CD4-positive, alpha-beta T cell (primary cell): ENCODE measurements at regions of chr12 and their contacts with region 1.

Region 1: DNA sequence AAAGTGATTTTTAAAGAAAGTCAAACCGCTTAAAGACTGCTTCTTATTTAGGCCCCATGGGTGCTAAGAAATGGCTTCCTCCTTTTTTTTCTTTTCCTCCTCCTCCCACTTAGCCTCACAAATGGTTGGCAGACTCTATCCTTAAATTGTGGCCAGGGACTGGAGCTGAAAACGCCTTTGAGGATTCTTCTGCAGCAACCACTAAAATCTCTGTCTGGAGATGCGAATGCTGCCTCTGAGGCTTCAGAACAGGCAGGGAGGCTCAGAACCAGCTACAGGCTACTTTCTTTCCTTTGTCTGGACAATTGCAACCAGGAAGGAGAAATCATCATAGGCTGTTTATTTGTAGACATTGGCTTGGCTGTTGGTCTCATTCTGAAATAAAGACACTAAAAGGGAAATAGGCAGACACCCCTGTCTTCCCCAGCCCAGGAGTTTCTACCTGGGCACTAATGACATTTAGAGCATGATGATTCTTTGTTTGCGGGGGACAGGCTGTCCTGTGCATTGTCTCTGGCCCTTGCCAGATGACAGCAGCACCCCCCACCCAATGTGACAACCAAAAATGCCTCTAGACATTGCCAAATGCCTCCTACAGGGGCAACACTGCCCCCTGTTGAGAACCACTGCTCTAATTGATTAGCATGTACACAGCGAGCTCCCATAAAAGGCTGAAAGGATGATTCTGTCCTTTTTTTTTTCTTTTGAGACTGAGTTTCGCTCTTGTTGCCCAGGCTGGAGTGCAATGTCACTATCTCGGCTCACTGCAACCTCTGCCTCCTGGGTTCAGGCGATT is 50.3 kb downstream of the MAP1LC3B2 start:
- DNase-seq: peak in 10 of 14 experiments; percentile 4 to 60 (median 22)
- ATAC-seq: peak; percentile 39
- H3K4me3 ChIP-seq: no peak overlapping the region
- H3K4me3 Mint-ChIP-seq: no peak overlapping the region
- H3K27ac ChIP-seq: no peak overlapping the region
- H3K27ac Mint-ChIP-seq: no peak overlapping the region
- H3K4me1 ChIP-seq: peaks cover 5% of the 10 kb centered on the region
- H3K4me1 Mint-ChIP-seq: peaks cover 3% of the 10 kb centered on the region
- H3K27me3 ChIP-seq: peaks cover 0 to 2% of the 10 kb centered on the region in 2 experiments
- H3K27me3 Mint-ChIP-seq: peaks cover 4% of the 10 kb centered on the region
- CTCF ChIP-seq: peak; percentile 48

Region 2: GRCh38 chr12:115998119-115998633 is 611.3 kb before region 1 on chr12:
- CTCF ChIA-PET with region 1: no interaction called
- POLR2A ChIA-PET with region 1: no interaction called
- intact Hi-C with region 1: loop called in 1 of 2 experiments (anchors 5 kb)
- DNase-seq: peak in 4 of 14 experiments; percentile 35 to 69 (median 56)
- ATAC-seq: peak; percentile 46
- H3K4me3 ChIP-seq: no peak overlapping the region
- H3K4me3 Mint-ChIP-seq: no peak overlapping the region
- H3K27ac ChIP-seq: no peak overlapping the region
- H3K27ac Mint-ChIP-seq: peak overlapping the region; percentile 54
- H3K4me1 ChIP-seq: peaks cover 3% of the 10 kb centered on the region
- H3K4me1 Mint-ChIP-seq: peaks cover 26% of the 10 kb centered on the region
- H3K27me3 ChIP-seq: no peaks in the 10 kb centered on the region
- H3K27me3 Mint-ChIP-seq: no peaks in the 10 kb centered on the region
- CTCF ChIP-seq: peak; percentile 94

Region 3: GRCh38 chr12:116222358-116222757 is 387.2 kb before region 1 on chr12:
- CTCF ChIA-PET with region 1: no interaction called
- POLR2A ChIA-PET with region 1: no interaction called
- intact Hi-C with region 1: no loop called
- DNase-seq: peak in 1 of 14 experiments; percentile 50
- ATAC-seq: no peak
- H3K4me3 ChIP-seq: no peak overlapping the region
- H3K4me3 Mint-ChIP-seq: no peak overlapping the region
- H3K27ac ChIP-seq: no peak overlapping the region
- H3K27ac Mint-ChIP-seq: no peak overlapping the region
- H3K4me1 ChIP-seq: no peaks in the 10 kb centered on the region
- H3K4me1 Mint-ChIP-seq: peaks cover 48% of the 10 kb centered on the region
- H3K27me3 ChIP-seq: no peaks in the 10 kb centered on the region
- H3K27me3 Mint-ChIP-seq: no peaks in the 10 kb centered on the region
- CTCF ChIP-seq: no peak

Region 4: GRCh38 chr12:116591855-116592637 is 17.5 kb before region 1 on chr12:
- CTCF ChIA-PET with region 1: no interaction called
- POLR2A ChIA-PET with region 1: no interaction called
- intact Hi-C with region 1: no loop called
- DNase-seq: no peak
- ATAC-seq: no peak
- H3K4me3 ChIP-seq: no peak overlapping the region
- H3K4me3 Mint-ChIP-seq: no peak overlapping the region
- H3K27ac ChIP-seq: no peak overlapping the region
- H3K27ac Mint-ChIP-seq: peak overlapping the region; percentile 69
- H3K4me1 ChIP-seq: peaks cover 38% of the 10 kb centered on the region
- H3K4me1 Mint-ChIP-seq: peaks cover 41% of the 10 kb centered on the region
- H3K27me3 ChIP-seq: no peaks in the 10 kb centered on the region
- H3K27me3 Mint-ChIP-seq: no peaks in the 10 kb centered on the region
- CTCF ChIP-seq: no peak